Psoas muscle (tissue), 8 donors: ENCODE measurements at regions of chr7 and their contacts with region 1.

Region 1: DNA sequence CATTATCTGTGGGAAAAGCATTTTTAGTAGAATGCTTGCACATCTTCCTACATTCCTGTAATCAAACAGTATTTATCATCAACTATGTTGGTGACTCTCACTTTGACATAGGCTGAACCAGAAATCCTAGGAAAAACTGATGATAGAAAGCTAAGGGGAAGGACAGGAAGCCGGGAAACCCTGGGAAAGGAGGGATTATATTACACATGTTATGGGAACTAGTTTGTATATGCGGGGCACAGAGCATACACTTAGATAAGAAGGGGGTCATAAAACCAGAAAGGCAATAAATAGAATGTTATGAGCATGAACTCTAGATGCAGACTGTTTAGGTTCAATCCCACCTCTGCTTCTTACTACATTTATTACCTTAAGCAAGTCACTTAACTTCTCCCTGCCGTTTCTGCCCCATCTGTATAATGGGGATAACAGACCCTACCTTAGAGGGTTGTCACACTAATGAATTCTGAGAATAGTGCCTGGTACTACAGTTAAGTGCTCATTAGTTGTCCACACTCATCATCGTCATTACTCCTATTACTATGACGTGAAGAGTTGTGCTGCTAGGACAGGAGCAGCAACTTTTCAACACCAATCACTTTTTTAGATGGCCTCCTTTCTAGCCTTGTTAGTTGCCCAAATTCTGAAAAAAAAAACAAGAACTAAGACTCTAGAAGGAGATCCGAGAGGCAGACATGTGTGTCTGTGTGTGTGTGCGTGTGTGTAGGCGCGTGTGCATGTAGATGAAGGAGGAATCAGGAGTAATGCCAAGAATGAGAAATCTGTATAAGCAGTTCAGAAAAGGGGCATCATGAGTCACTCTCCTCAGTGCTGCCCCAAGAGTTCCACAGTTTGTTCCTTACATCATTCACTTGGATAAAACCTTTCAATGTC is 52.2 kb downstream of the KMT2C start:
- DNase-seq: no peak
- ATAC-seq: peak in 3 of 4 donors; percentile 19 to 56 (median 55)
- H3K4me3 ChIP-seq: no peak overlapping the region
- H3K27ac ChIP-seq: no peak overlapping the region
- H3K4me1 ChIP-seq: peaks cover 44% of the 10 kb centered on the region
- H3K27me3 ChIP-seq: no peaks in the 10 kb centered on the region
- CTCF ChIP-seq: no peak

Region 2: DNA sequence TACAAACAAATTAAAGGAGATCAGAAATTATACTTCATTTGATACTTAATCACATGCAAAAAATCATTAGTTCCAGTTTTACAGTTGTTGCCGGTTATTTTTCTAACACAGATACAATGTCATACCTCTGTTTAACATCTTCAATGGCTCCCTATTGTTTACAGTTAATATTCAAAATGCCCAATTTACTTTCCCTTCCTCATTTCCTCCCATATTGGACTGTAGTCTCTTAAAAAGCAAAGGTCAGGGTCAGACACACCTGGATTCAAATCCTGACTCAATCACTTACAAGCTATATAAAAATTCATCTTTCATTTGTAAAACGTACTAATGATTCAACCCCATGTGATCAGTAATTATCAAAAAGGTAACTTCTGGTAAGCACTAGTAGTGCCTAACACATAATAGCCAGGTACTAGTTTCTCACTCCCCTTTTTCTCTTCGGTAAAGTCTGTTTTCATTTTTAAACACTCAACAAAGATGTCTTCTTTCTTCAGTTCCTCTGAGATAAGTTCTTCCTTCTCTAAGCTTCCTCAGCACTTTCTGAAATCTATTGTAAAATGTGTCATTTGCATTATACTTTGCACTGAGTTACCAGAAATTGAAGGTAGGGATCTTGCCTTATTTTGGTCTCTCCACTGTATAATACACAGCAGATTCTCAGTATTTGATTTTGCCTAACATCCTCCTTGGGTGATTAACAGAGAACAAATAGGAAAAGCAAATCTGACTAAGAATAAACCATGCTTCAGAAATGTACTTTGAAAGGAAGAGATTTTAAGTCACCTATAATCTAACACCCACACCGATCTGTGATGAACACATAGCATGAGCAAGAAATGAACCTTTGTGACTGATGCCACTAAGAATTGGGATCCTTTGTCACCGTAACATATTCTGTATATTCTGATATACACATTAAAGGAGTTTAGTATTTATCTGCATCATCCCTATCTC is 36.2 kb after region 1 on chr7:
- intact Hi-C with region 1: loop called in 1 of 2 experiments (anchors 5 kb)
- DNase-seq: no peak
- ATAC-seq: no peak
- H3K4me3 ChIP-seq: no peak overlapping the region
- H3K27ac ChIP-seq: no peak overlapping the region
- H3K4me1 ChIP-seq: peaks cover 8% of the 10 kb centered on the region
- H3K27me3 ChIP-seq: no peaks in the 10 kb centered on the region
- CTCF ChIP-seq: no peak